Breast epithelium (tissue), 4 donors: ENCODE measurements at regions of chr1 and their contacts with region 1.

Region 1: GRCh38 chr1:47809301-47810084 is 187.7 kb downstream of the TRABD2B start:
- DNase-seq: no peak
- H3K4me3 ChIP-seq: no peak overlapping the region
- H3K27ac ChIP-seq: peak overlapping the region in 1 of 2 donors; percentile 32
- H3K4me1 ChIP-seq: no peaks in the 10 kb centered on the region
- H3K27me3 ChIP-seq: no peaks in the 10 kb centered on the region
- CTCF ChIP-seq: no peak
- POLR2A ChIP-seq: no peak

Region 2: DNA sequence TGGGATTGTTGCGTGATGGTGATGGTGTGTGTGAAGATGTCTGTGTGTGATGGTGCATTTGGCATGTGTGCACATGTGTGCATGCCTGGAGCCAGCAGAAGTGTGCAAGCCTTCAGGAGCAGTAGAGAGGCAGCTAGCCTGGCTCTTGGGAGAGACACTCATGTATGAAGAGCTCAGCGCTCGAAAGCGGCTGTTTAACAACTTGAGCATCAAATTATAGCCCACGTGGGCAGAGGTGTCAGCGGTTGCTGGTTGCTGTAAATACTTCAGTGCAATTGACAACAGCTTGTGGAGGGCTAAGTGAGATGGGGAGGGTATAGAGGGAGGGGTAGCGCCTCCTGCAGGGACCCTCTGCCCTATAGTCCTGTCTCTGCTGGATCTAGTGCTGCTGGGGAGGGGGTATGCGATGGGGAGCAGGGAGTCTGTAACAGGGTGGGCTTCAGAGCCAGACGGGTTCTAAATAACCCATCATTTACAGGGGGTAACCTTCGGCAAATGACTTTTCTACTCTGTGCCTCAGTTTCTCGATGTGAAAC is 350.2 kb before region 1 on chr1:
- intact Hi-C with region 1: no loop called
- DNase-seq: no peak
- H3K4me3 ChIP-seq: no peak overlapping the region
- H3K27ac ChIP-seq: no peak overlapping the region
- H3K4me1 ChIP-seq: no peaks in the 10 kb centered on the region
- H3K27me3 ChIP-seq: peaks cover 0 to 45% of the 10 kb centered on the region in 2 donors
- CTCF ChIP-seq: no peak
- POLR2A ChIP-seq: no peak

Region 3: DNA sequence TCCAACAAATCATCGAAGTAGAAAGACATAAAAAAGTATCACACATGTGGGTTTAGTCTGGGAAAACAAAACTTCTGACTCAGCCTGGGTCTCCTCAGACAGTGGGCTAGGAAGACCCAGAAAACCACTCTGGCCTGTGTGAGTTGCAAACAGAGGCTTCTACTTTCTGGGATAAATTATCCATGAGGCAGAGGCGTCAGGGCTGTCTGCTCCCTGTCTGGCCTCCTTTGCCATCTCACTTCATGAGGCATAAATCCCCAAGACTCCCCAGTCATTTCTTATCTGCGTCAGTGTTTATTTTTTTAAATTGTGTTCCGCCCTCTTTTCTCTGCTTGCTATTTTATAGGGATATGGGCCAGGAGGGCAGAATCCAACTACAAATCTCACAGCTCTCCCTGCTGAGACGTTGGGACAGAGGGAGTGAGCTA is 268.3 kb after region 1 on chr1:
- intact Hi-C with region 1: no loop called
- DNase-seq: no peak
- H3K4me3 ChIP-seq: no peak overlapping the region
- H3K27ac ChIP-seq: no peak overlapping the region
- H3K4me1 ChIP-seq: no peaks in the 10 kb centered on the region
- H3K27me3 ChIP-seq: no peaks in the 10 kb centered on the region
- CTCF ChIP-seq: no peak
- POLR2A ChIP-seq: no peak

Region 4: GRCh38 chr1:48831120-48831978 is 1021.9 kb after region 1 on chr1:
- intact Hi-C with region 1: loop called (anchors 5 kb)
- DNase-seq: no peak
- H3K4me3 ChIP-seq: no peak overlapping the region
- H3K27ac ChIP-seq: peak overlapping the region in 1 of 2 donors; percentile 10
- H3K4me1 ChIP-seq: no peaks in the 10 kb centered on the region
- H3K27me3 ChIP-seq: no peaks in the 10 kb centered on the region
- CTCF ChIP-seq: no peak
- POLR2A ChIP-seq: no peak